Heart right ventricle (tissue), 16 donors: ENCODE measurements at regions of chr12 and their contacts with region 1.

Region 1: DNA sequence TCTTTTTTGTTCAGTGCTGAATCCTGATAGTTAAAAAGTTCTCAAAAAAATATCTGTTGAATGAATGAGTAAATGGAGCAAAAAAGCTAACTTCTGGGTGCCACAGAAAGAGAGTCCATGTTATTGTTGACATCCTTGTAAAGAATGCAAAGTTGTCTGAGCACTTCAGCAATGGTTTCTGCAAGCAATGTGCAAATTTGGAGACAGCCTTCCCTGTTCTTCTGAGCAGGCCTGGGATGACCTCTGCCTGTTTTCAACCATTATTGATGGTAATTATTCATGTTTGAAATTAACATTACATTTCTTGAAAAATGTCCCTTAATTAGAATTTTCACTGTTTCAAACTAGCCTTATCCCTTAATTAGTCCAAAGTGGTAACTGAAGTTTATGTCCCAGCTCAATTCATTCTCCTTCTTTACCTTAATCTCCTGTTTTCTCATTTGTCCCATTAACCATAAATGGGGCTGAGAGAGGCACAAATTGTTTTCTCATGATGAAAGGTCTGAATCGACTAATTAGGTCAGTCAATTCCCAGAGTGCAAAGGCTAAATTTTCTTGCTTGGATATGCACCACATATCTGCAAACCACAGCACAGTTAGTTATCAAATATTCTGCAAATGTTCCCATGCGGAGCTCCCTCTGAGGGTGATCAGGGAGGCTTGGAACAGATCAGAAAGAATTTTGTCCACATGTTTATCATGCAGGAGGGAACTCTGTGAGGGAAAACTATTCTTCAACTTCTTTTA is 139.4 kb upstream of the KRR1 start:
- DNase-seq: no peak
- ATAC-seq: peak in 7 of 8 donors; percentile 25 to 88 (median 64)
- H3K4me3 ChIP-seq: no peak overlapping the region
- H3K27ac ChIP-seq: peak overlapping the region in 4 of 10 donors; percentile 28 to 58 (median 46)
- H3K4me1 ChIP-seq: peaks cover 0 to 29% (median 16%) of the 10 kb centered on the region in 9 donors
- H3K27me3 ChIP-seq: no peaks in the 10 kb centered on the region
- CTCF ChIP-seq: no peak

Region 2: DNA sequence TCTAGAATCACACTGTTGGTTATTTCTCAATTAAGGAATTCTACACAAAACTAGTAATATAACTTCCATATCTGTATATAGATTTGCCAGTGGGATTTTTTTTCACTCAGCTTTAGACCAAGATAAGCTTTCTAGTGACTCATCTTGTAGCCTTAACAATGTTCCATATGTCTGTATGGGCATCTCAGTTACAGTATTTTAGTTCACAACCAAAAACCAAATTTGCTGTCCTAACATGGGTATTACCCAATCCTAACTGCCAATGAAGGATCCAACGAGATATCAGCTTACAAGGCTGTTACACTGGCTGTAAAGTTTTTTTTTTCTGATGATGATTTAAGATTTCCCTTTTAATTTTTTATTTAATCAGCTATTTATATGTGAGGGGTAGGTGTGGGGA is 107.8 kb before region 1 on chr12:
- intact Hi-C with region 1: no loop called
- DNase-seq: no peak
- ATAC-seq: no peak
- H3K4me3 ChIP-seq: no peak overlapping the region
- H3K27ac ChIP-seq: no peak overlapping the region
- H3K4me1 ChIP-seq: no peaks in the 10 kb centered on the region
- H3K27me3 ChIP-seq: no peaks in the 10 kb centered on the region
- CTCF ChIP-seq: no peak

Region 3: DNA sequence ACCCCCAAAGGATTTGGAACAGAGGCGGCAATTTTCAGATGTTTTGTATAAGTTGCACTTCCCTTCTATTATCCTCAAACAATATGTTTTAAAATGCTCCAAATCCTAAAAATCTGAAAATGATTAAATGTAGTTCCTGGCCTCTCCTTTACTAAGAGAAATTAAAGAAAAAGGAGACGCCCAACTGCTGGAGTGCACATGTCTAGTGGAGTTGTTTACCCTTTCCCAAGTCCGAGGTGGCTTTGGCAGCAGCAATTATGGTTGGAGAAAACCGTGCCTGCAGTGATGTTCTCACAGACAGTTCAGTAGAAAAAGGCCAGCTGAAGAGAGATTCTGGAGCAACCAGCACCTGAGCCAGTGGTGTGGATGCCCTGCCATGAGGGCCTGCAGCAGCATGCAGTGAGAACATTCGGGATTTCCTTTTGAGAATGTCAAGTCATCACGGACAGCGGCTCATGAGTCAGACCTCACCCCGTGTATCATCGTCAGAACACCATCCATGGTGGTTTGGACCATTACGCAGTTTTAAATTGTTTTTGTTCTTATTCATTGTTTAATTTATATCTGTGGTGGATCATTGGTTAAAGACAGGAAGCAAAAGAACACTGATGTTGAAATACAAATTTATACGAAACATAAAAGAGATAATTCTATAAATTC is 39.7 kb after region 1 on chr12:
- intact Hi-C with region 1: loop called in 1 of 10 experiments (anchors 5 kb)
- DNase-seq: no peak
- ATAC-seq: no peak
- H3K4me3 ChIP-seq: no peak overlapping the region
- H3K27ac ChIP-seq: no peak overlapping the region
- H3K4me1 ChIP-seq: no peaks in the 10 kb centered on the region
- H3K27me3 ChIP-seq: no peaks in the 10 kb centered on the region
- CTCF ChIP-seq: no peak

Region 4: DNA sequence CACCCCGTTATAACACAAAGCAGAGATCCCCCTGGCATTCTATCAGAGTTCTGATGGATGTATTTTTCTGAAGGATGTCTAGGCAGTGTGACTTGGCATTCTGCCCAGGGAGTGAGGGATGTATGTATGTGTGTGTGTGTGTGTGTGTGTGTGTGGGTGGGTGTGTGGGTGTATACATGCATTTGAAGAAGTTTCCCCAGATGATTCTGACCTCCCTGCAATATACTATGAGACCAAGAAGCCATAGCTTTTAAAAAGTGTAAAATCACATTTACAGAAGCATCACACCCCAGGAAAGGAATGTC is 493.4 kb after region 1 on chr12:
- intact Hi-C with region 1: no loop called
- DNase-seq: no peak
- ATAC-seq: no peak
- H3K4me3 ChIP-seq: no peak overlapping the region
- H3K27ac ChIP-seq: no peak overlapping the region
- H3K4me1 ChIP-seq: no peaks in the 10 kb centered on the region
- H3K27me3 ChIP-seq: no peaks in the 10 kb centered on the region
- CTCF ChIP-seq: no peak